ENCODE measurements at regions of chr5 and their contacts with region 1.

Region 1: DNA sequence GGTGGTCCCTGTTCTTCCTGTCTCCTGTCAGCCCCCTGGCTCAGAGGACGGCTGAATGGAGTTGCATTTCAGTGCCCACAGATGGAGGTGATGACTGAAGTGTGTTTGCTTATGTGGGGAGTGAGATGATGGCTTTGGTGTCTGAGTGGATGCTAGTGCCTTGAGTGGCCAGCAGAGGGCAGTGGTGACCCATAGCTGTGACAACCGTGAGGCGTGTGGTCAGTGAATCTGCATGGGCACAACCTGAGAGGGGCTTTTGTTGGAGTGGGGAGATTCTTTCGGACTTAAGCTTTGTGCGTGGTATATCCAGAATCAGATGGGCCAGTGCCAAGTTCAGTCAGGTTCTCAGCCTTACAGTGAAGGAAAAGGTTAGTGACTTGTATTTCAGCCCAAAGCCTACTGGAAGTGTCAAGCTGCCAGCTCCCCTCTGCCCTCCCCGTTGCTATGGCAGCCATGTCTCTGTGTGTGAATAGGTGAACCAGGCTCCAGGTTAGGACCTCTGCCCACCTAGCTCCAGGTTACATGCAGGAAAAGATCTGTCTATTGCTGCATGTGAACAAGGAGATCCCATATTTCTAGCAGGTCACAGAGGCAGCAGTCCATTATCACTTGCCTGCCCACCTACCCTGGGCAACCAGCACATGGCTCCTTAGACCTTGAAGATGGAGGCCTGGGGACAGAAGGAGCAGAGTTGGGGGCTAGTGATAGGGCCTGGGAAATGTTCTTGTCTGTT is 14.7 kb upstream of the CXXC5 start:
- DNase-seq: no peak
- H3K4me3 ChIP-seq: no peak overlapping the region
- H3K27ac ChIP-seq: no peak overlapping the region
- H3K4me1 ChIP-seq: peaks cover 0 to 15% of the 10 kb centered on the region in 2 donors
- H3K27me3 ChIP-seq: no peaks in the 10 kb centered on the region
- CTCF ChIP-seq: peak; percentile 95 to 100 (median 98)
- POLR2A ChIP-seq: no peak

Region 2: DNA sequence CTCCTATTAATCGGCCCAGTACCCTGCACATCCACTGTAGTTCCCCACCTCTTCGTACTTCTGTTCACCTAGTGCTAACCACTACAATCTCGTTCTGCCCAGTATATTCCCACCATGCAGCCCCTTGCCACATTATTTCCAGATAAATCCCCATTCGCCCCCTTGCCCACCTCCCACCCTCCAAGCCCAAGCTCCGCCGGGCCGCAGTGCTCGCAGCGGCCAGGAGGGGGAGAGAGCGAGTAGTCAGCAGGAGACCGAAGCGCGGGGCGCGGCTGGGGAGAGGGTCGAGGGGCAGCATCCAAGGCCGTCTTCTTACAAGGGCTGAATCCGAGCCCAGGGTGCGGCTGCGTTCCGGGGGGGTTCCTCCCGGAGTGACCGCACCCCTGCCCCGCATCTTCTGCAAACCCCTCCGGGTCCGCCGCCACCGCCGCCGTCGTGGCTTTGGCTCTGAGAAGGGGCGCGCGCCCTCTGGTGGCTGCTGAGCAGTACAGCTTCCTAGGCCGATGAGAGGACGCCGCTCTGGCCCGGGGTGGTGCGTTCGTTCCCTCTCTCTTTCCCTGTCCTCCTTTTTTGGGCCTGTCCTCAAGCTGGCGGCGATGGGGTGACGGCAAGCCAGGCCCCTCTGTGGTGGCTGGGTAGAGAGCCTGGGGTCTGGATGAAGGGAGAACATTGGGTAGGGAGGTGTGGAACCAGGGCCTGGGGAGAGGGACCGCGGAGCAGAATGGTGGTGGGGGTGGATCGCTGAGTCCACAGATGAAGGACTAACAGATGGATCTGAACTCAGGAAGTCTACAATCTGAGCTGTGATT is 132.2 kb after region 1 on chr5:
- intact Hi-C with region 1: loop called (anchors 5 kb)
- DNase-seq: peak; percentile 53 to 71
- H3K4me3 ChIP-seq: peak overlapping the region; percentile 39 to 66 (median 54)
- H3K27ac ChIP-seq: no peak overlapping the region
- H3K4me1 ChIP-seq: no peaks in the 10 kb centered on the region
- H3K27me3 ChIP-seq: peaks cover 0 to 19% of the 10 kb centered on the region in 2 donors
- CTCF ChIP-seq: peak; percentile 98 to 100 (median 99)
- POLR2A ChIP-seq: no peak